Activated naive CD4-positive, alpha-beta T cell treated with anti-CD3 and anti-CD28 coated beads for 36 hours (primary cell): ENCODE measurements at regions of chr6 and their contacts with region 1.

Region 1: DNA sequence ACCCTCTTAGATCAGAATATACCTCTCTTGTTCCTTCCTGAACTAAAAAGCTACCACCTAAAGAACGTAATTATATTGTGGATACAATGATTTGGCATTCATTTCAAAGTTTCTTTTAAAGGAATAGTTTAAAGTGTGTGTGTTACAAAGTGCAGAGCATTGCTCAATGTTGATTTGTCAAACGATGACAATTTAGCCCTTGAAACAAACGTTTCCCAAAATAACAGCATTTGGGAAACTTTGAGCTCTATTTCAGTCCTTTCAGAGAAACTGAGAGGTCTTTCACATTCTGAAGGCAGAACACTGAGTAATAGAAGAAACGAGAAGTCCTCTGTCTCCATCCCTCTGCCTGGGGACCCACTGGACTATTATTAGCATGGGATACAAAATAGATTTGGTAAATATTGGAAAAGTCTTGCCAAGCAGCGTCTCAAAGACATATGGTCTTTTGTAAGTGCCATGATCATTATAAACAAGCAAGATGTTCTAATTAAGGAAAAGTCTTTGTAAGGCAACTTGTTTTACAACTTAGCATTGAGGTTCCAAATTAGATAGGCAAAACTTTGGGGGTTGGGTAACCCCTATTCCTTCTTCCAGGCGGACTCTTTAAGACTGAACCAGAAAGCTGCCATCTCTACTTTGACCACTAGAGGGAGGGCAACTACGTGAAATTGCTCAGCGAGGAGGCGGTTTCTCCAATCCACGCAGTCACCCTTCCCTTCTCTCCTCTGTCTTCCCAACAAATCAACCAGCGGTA is 208.8 kb downstream of the RNF144B start:
- DNase-seq: peak; percentile 56
- H3K4me3 Mint-ChIP-seq: no peak overlapping the region
- H3K27ac Mint-ChIP-seq: no peak overlapping the region
- H3K4me1 Mint-ChIP-seq: no peaks in the 10 kb centered on the region
- H3K27me3 Mint-ChIP-seq: peaks cover 5% of the 10 kb centered on the region

Region 2: DNA sequence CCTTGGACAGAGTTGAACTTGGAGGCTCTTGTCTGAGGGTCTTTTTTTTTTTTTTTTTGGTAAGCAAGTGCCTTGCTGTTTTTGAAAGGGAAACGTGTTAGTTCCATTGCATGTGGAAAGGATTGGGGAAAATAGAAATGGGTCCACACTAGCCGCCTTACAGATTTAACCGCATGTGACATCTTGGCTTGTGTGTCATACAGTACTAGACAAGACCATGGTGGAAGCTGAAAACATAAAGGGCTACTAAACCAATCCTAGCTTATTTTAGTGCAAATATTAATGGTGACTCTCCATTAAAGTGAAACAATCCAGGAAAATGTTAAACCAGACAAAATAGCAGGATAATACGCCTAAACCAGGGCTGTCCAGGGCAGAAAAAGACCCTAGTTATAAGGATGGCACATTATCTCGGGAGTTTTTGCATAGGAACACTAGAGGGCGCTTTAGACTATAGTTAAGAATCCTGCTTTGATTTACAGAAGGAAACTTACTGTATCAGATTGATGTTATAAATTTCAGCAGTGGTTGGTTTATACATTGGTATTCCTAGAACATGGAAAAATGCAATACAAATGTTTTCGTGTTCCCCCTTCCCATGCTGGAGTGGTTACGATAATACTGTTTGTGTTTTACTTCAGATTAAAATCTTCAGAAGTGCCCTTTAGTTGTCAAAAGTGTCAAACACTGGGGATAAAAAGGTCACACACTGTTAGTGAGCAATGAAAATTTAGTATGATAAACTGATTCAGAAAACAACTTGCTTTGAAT is 271.8 kb before region 1 on chr6:
- CTCF ChIA-PET with region 1: no interaction called
- intact Hi-C with region 1: loop called (anchors 10 kb)
- DNase-seq: peak; percentile 12
- H3K4me3 Mint-ChIP-seq: no peak overlapping the region
- H3K27ac Mint-ChIP-seq: no peak overlapping the region
- H3K4me1 Mint-ChIP-seq: peaks cover 6% of the 10 kb centered on the region
- H3K27me3 Mint-ChIP-seq: no peaks in the 10 kb centered on the region

Region 3: GRCh38 chr6:18561037-18561750 is 34.8 kb before region 1 on chr6:
- CTCF ChIA-PET with region 1: no interaction called
- intact Hi-C with region 1: no loop called
- DNase-seq: no peak
- H3K4me3 Mint-ChIP-seq: no peak overlapping the region
- H3K27ac Mint-ChIP-seq: no peak overlapping the region
- H3K4me1 Mint-ChIP-seq: no peaks in the 10 kb centered on the region
- H3K27me3 Mint-ChIP-seq: peaks cover 16% of the 10 kb centered on the region

Region 4: GRCh38 chr6:18823782-18824386 is 227.9 kb after region 1 on chr6:
- CTCF ChIA-PET with region 1: no interaction called
- intact Hi-C with region 1: loop called (anchors 1 kb)
- DNase-seq: peak; percentile 61
- H3K4me3 Mint-ChIP-seq: no peak overlapping the region
- H3K27ac Mint-ChIP-seq: no peak overlapping the region
- H3K4me1 Mint-ChIP-seq: no peaks in the 10 kb centered on the region
- H3K27me3 Mint-ChIP-seq: no peaks in the 10 kb centered on the region

Region 5: DNA sequence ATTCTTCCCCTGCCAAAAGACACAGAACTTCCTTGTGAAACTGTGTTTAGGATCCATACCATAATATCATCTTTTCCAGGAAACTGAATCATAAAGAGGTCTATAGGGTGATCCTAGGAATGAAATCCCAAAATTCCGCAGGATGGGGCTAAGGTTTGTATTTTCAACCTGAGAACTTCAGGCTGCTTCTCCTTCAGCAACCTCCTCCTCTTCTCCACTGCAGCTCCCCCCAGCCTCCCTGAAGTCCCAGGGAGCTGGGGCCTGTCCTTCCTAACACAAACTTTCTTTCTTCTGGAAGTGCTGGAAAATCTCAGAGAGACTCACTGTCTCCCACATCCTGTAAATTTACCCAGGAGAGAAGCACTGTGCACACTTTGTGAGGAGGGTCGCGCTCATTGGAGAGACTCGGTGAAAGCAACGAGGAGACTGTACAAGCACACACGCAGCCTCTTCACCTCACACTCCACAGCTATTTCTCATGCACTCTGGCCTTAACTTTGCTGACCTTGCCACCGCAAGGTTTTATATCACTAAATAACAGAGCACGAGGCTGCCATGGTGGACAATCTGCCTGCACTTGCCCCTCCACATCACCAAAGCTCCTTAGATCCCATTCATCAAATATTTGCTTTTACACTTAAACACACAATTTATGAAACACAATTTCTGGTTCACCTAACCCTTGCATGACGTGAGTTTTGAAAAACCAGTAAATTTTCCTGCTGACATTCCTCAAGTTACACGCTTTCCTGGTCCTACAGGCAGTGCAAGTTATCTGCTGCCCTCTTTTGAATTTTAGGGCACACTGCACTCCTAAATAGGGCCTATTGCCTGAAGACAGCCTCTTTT is 1255.5 kb after region 1 on chr6:
- CTCF ChIA-PET with region 1: no interaction called
- intact Hi-C with region 1: loop called (anchors 5 kb)
- DNase-seq: no peak
- H3K4me3 Mint-ChIP-seq: no peak overlapping the region
- H3K27ac Mint-ChIP-seq: no peak overlapping the region
- H3K4me1 Mint-ChIP-seq: no peaks in the 10 kb centered on the region
- H3K27me3 Mint-ChIP-seq: peaks cover 7% of the 10 kb centered on the region

Region 6: GRCh38 chr6:20056350-20056992 is 1460.5 kb after region 1 on chr6:
- CTCF ChIA-PET with region 1: no interaction called
- intact Hi-C with region 1: loop called (anchors 1 kb)
- DNase-seq: no peak
- H3K4me3 Mint-ChIP-seq: no peak overlapping the region
- H3K27ac Mint-ChIP-seq: no peak overlapping the region
- H3K4me1 Mint-ChIP-seq: no peaks in the 10 kb centered on the region
- H3K27me3 Mint-ChIP-seq: no peaks in the 10 kb centered on the region

Region 7: GRCh38 chr6:20126789-20127653 is 1531.1 kb after region 1 on chr6:
- CTCF ChIA-PET with region 1: interaction called, 3 read pairs
- intact Hi-C with region 1: loop called (anchors 2 kb)
- DNase-seq: peak; percentile 73
- H3K4me3 Mint-ChIP-seq: no peak overlapping the region
- H3K27ac Mint-ChIP-seq: no peak overlapping the region
- H3K4me1 Mint-ChIP-seq: peaks cover 4% of the 10 kb centered on the region
- H3K27me3 Mint-ChIP-seq: no peaks in the 10 kb centered on the region